ENCODE measurements at regions of chr22 and their contacts with region 1.

Region 1: GRCh38 chr22:30920407-30920806 is 48.2 kb downstream of the MORC2 start:
- DNase-seq: peak; percentile 84

Region 2: DNA sequence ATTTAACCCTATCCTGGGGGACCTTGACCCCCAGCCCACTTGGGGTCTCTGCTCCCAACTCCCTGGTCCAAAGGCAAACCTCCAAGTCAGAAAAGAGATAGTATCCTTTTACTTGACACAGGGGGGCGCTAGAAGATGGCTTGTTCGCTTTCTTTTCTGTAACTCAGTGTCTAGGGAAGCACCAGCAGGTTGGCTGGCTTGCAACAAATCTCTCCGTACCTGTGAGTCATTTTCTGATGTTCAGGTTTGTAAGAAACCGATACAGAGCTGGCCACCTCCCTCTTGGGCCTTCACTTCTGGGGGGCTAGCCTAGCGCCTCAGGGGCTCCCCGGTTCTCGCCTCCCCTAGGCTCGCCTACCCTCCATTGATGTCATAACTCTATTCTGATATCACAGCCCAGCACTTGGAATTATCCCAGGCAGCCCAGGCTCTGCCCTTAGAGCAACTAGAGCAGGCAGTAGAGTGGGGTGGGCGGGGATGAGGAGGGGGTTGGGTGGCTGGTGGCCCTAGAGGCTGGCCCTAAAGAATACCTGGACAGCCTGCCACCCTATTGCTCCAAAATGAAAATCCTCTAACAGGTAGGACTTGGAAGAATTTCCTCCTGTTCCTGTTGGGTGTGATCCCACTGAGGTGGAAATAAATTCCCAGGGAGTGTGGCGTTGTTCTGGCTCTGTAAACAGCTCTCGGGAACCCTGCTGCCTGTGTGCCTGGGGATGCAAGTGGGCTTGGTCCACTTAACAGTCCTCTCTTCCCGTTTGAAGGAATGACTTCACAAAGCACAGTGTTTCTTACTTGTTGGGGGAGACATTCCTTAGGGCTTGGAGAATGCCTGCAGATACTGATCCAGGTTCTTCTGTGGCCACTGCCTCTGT is 156.4 kb before region 1 on chr22:
- intact Hi-C with region 1: loop called (anchors 1 kb)
- DNase-seq: no peak

Measured in cardiac septum (tissue), 1 donor.